Activated CD4-positive, alpha-beta memory T cell treated with anti-CD3 and anti-CD28 coated beads for 36 hours (primary cell): ENCODE measurements at regions of chr22 and their contacts with region 1.

Region 1: DNA sequence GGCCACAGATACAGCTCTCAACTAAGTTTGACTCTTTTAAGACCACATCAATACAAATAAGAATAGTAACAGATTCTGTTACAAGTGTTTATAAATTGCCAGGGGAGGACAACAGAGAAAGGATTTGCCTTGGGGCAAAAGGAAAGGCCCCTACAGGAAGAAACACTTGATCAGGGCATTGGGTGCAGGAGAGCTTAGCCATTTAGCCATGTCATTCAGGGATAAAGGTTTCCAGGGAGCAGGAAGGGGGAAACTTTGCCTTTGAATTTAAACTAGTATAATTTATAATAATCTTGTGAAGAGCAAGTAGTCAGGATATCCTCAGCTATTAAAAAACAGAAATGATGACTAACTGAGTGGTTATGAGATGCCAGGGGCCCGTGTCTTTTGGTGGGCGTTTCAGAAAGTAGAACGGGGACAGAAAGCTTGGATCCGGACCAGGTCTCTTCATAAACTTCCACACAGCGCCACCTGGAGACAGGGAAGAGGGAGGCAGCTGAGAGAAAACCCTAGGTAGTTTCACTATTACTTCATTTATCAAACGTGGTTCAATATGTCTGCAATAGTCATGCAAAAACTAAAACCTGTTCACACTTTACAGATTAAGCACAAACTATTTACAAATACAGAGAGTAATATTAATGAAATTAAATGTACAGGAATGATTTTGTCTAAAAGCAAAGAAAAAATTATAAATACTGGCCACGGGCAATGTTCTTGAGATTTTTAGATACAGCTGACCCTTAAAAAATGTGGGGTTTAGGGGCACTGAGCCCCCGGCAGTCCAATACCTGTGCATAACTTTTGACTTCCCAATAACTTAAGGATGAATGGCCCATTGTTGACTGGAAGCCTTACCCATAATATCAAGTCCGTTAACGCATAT is 11.0 kb upstream of the SLC5A4 start:
- DNase-seq: peak; percentile 83
- H3K4me3 Mint-ChIP-seq: no peak overlapping the region
- H3K27ac Mint-ChIP-seq: no peak overlapping the region
- H3K4me1 Mint-ChIP-seq: peaks cover 9% of the 10 kb centered on the region
- H3K27me3 Mint-ChIP-seq: peaks cover 9% of the 10 kb centered on the region

Region 2: DNA sequence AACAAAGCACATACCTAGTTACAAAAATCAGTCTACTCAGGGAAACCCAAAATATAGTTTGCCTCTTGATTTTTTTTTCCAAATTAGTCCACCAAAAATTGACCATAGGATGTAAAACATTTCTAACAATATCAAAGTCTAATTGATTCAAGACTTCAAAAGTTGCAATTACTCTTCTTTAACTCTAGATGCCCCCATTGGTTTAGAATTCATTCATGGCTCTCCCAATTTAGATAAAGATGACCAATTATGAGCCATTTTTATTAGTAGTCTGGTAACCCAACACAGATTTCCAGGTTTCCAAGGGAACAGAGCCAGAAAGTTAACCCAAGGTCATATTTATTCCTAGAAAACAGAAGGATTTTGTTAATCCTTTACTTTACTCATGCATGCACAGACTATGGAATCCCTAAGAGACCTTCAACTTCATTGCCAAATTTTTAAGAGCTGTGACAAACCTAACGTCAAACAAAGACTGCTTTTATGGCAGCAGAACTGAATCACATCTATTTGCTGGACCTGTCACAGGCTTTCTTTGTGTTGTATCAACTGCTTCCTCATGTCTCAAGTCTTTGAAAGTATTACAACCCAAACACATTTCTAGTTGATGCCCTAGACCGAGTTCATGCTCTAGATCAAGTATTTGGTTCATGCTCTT is 162.3 kb before region 1 on chr22:
- CTCF ChIA-PET with region 1: interaction called, 30 read pairs
- POLR2A ChIA-PET with region 1: no interaction called
- intact Hi-C with region 1: loop called (anchors 1 kb)
- DNase-seq: no peak
- H3K4me3 Mint-ChIP-seq: no peak overlapping the region
- H3K27ac Mint-ChIP-seq: no peak overlapping the region
- H3K4me1 Mint-ChIP-seq: no peaks in the 10 kb centered on the region
- H3K27me3 Mint-ChIP-seq: peaks cover 10% of the 10 kb centered on the region

Region 3: DNA sequence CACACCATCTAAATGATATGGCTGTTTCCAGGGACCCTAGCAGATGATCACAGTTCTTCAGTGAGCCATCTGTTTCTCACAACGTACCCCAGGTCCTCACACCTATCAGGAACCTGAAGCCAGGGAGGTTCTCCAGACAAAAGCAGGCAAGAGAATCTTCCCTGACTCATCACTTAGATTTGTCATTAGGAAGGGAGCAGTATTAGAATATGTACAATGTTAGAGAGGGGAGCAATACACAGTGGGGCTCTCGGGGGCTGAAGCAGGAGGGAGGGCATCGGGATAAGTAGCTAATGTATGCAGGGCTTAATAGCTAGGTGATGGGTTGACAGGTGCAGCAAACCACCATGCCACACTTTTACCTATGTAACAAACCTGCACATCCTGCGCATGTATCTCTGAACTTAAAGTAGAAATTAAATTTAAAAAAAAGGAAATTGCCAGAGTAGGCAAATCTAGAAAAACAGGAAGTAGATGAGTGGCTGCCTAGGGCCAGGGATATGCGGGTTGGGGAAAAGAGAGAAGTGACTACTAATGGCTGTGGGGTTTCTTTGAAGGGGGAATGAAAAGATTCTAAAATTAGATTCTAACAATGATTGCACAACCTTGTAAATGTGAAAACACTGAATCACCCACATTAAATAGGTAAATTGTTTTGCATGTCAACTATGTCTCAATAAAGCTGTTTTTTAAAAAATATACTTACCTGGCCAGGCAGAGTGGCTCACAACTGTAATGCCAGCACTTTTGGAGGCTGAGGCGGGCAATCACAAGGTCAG is 121.4 kb before region 1 on chr22:
- CTCF ChIA-PET with region 1: interaction called, 12 read pairs
- POLR2A ChIA-PET with region 1: no interaction called
- intact Hi-C with region 1: loop called (anchors 5 kb)
- DNase-seq: peak; percentile 26
- H3K4me3 Mint-ChIP-seq: no peak overlapping the region
- H3K27ac Mint-ChIP-seq: peak overlapping the region; percentile 92
- H3K4me1 Mint-ChIP-seq: peaks cover 46% of the 10 kb centered on the region
- H3K27me3 Mint-ChIP-seq: no peaks in the 10 kb centered on the region

Region 4: DNA sequence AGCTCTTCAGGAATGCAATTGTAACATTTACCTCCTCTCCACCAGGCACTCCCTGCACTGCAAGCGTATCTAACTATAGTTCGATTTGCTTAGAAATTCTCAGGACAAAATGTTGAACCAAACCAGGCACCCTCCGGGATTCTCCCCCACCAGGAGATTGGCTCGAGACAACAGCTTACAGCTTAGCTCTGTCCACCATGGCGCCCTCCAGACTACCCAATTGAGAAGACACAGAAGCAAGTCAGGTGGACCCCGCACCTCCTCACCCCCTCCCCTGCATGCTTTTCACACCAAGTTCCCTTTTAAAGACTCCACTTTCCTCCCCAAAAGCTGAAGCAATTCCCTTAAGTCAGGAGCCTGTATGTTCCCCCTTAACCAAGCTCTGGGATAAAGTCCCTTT is 56.9 kb after region 1 on chr22:
- CTCF ChIA-PET with region 1: no interaction called
- POLR2A ChIA-PET with region 1: no interaction called
- intact Hi-C with region 1: no loop called
- DNase-seq: no peak
- H3K4me3 Mint-ChIP-seq: no peak overlapping the region
- H3K27ac Mint-ChIP-seq: no peak overlapping the region
- H3K4me1 Mint-ChIP-seq: no peaks in the 10 kb centered on the region
- H3K27me3 Mint-ChIP-seq: peaks cover 5% of the 10 kb centered on the region